ENCODE measurements at regions of chr7 and their contacts with region 1.

Region 1: DNA sequence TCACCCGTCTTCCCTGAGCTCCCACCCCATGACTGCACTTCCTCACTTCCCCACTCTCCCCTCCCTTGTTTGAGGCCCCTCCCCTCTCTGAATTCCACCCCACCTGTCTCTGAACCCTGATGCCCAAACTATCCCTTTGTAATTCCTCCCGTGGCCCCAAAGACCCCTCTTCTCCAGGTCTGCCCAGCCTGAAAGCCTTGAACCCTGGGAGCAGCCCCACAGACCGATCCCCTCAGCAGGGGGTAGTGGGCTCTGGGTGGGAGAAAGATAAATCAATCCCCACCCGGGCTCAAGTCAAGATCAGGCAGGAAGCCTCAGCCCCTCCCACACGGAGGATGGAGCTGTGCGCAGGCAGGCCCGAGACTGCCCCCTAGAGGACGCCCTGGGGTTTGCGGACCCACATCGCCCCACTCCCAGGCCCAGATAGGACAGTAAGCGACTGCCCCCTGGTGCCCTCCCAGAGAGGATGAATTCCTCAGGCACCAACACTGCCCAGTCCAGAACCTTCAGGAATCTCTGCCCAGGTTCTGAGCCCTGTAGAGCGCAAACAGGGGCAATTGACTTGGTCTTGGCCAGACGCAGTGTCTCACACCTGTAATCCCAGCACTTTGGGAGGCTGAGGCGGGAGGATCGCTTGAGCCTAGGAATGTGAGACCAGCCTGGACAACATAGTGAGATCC is 11.7 kb downstream of the HSPB1 start:
- DNase-seq: peak; percentile 82 to 99
- H3K4me3 ChIP-seq: no peak overlapping the region
- H3K27ac ChIP-seq: peak overlapping the region in 1 of 2 donors; percentile 43
- H3K4me1 ChIP-seq: peaks cover 7 to 12% of the 10 kb centered on the region in 2 donors
- H3K27me3 ChIP-seq: no peaks in the 10 kb centered on the region
- CTCF ChIP-seq: peak; percentile 100

Region 2: DNA sequence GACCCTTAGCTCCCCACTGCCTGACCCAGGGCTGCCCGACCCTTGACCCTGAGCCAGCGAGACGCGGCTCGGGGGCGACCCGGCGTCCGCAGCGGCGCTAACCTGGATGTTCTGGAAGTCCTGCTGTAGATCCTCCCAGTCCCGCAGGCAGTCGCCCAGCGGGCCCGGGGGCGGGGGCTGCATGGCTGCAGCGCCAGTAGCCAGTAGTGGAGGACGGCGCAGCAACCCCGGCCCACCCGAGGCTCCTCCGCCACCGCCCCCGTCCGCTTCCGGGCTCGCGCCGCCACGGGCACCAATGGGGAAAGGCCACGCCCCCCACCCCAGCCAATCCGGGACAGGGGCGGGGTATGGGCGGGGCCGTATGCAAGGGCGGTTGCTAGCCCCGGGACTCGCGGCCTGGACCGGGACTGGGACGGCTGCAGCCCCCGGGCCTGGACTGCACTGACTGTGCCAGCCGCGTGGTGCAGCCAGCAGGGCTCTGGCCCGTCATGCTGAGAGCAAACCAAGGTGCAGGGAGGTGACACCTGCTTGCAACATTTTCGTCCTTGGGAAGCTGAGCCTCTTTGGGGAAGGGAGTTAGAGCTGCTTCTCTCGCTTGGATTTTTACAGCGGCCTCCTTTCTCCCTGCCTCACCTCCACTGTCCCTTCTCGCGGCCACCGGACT is 319.7 kb before region 1 on chr7 and contains the start of gene TMEM120A:
- intact Hi-C with region 1: loop called (anchors 10 kb)
- DNase-seq: peak; percentile 84 to 98
- H3K4me3 ChIP-seq: peak within 1 kb of the TSS; percentile 92 to 93
- H3K27ac ChIP-seq: peak within 1 kb of the TSS; percentile 99 to 100
- H3K4me1 ChIP-seq: peaks cover 10 to 25% of the 10 kb centered on the region in 2 donors
- H3K27me3 ChIP-seq: no peaks in the 10 kb centered on the region
- CTCF ChIP-seq: peak; percentile 29 to 42 (median 31)
- total RNA-seq, gene TMEM120A: 24.2 TPM

Region 3: DNA sequence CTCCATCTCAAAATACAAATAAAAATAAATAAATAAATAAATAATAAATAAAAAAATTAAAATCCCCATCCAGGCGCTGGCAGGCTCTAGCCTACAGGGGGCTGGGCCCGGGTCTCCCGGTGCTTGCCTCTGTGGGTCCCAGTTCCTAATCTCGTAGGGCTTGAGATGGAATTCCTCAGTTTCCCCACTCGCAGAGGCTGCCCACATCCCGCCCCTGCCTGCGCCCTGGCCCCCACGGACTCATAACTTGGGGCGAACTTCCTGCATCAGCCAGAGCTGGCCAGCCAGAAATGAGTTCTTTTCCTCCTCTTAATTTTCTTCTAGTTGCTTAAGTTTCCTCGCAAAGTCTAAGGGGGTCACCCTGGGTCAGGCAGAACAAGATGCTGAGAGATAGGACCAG is 134.5 kb before region 1 on chr7:
- intact Hi-C with region 1: loop called (anchors 1 kb)
- DNase-seq: no peak
- H3K4me3 ChIP-seq: no peak overlapping the region
- H3K27ac ChIP-seq: no peak overlapping the region
- H3K4me1 ChIP-seq: no peaks in the 10 kb centered on the region
- H3K27me3 ChIP-seq: no peaks in the 10 kb centered on the region
- CTCF ChIP-seq: no peak

Region 4: DNA sequence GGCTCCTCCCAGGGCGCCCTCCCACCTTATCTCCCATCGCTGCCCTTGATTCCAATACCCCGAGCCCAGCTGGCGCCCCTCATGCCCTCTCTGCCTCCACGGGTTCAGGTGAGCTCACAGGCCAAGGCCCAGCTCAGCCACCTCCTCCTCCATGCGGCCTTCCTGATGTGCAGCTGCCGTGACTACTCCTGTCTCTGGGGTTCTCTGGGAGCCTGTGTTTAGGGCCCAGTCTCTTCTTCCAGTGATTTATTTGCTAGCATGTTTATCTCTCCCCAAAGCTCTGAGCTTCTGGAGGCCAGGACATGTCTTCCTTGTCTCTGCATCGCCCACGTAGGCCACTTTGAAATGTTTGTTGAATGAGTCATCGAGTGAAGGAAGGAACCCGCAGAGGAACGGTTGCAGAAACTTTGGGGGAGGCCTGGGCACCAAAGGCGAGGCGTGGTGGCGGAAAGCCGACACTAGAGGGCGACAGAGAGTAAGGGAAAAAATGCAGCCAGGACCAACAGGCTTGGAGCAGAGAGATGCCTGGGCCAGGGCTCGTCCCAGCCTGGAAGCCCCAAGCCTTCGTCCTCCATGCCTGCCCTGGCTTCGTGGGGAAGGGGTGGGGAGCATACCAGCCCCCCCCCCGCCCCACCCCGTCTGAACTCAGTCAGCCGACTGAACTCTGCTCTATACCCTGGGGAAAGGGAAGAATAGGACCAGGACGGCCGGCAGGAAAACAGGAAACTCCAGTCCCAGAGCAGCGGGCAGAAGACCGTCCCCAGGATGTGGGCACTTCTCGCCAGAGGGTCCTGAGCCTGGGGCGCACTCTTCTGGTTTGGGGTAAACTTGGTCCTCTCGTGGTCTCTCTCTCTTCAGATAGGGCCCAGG is 22.6 kb before region 1 on chr7:
- intact Hi-C with region 1: loop called (anchors 1 kb)
- DNase-seq: peak; percentile 81 to 97
- H3K4me3 ChIP-seq: peak overlapping the region; percentile 24 to 59
- H3K27ac ChIP-seq: peak overlapping the region; percentile 93 to 99
- H3K4me1 ChIP-seq: peaks cover 24 to 29% of the 10 kb centered on the region in 2 donors
- H3K27me3 ChIP-seq: no peaks in the 10 kb centered on the region
- CTCF ChIP-seq: peak; percentile 97 to 98 (median 97)

Region 5: GRCh38 chr7:76393116-76394031 is 79.2 kb after region 1 on chr7:
- intact Hi-C with region 1: loop called (anchors 2 kb)
- DNase-seq: peak; percentile 56 to 96
- H3K4me3 ChIP-seq: peak overlapping the region; percentile 70 to 71
- H3K27ac ChIP-seq: peak overlapping the region; percentile 57 to 80
- H3K4me1 ChIP-seq: peaks cover 5 to 11% of the 10 kb centered on the region in 2 donors
- H3K27me3 ChIP-seq: no peaks in the 10 kb centered on the region
- CTCF ChIP-seq: no peak